Gastrocnemius medialis (tissue), 4 donors: ENCODE measurements at regions of chr15 and their contacts with region 1.

Region 1: DNA sequence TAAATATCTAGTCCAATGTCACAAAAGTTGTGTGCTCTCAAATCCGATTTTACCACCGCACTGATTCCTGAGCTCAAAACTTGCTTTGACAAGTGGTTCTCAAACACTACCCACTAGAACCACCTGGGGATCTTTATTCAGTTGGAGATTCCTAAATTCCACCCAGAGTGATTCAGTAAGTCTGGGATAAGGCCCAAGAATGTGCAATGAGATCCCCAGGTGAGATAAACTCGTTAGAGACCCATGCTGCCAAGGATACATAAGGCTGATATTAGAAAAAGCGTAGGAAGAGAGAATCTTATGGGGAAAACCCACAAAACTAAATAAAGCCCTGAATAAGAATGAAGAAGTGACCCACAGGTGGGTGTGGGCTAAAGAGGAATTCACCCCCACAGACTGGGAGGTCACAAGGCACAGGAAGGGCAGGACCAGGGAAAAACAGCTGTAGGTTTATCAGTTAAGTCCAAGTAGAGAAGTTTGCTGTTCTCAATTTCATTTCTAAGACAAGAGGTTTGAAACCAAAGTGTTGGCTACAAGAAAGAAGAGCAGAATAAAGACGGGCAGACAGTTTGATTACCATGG is 11.5 kb upstream of the RPS17 start:
- DNase-seq: no peak
- ATAC-seq: no peak
- H3K4me3 ChIP-seq: no peak overlapping the region
- H3K27ac ChIP-seq: no peak overlapping the region
- H3K4me1 ChIP-seq: peaks cover 19 to 34% of the 10 kb centered on the region in 2 donors
- H3K27me3 ChIP-seq: no peaks in the 10 kb centered on the region
- CTCF ChIP-seq: no peak
- POLR2A ChIP-seq: no peak

Region 2: DNA sequence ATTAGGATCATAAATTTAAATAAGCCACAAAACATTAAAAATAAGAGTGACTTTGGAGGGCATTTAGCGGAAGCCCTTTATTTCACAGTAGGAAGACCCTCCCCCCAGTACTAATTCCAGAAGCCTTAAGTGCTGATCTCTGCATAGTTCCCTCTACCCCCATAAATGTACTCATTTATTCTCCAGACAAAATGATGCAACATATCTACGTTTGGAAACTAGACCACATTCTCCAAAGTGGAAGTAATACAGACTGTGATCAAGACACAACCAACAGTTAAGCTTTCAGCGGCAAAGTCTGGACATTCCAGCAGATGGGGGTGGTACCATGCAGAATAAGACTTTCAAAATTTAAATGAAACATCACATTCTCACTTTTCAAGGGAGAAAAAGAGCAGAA is 33.3 kb after region 1 on chr15:
- in situ Hi-C with region 1: no loop called
- intact Hi-C with region 1: no loop called
- DNase-seq: no peak
- ATAC-seq: no peak
- H3K4me3 ChIP-seq: no peak overlapping the region
- H3K27ac ChIP-seq: no peak overlapping the region
- H3K4me1 ChIP-seq: no peaks in the 10 kb centered on the region
- H3K27me3 ChIP-seq: peaks cover 0 to 3% (median 0%) of the 10 kb centered on the region in 3 donors
- CTCF ChIP-seq: no peak
- POLR2A ChIP-seq: no peak

Region 3: GRCh38 chr15:82621964-82622363 is 70.2 kb after region 1 on chr15:
- in situ Hi-C with region 1: no loop called
- intact Hi-C with region 1: no loop called
- DNase-seq: no peak
- ATAC-seq: no peak
- H3K4me3 ChIP-seq: no peak overlapping the region
- H3K27ac ChIP-seq: no peak overlapping the region
- H3K4me1 ChIP-seq: no peaks in the 10 kb centered on the region
- H3K27me3 ChIP-seq: no peaks in the 10 kb centered on the region
- CTCF ChIP-seq: no peak
- POLR2A ChIP-seq: no peak

Region 4: DNA sequence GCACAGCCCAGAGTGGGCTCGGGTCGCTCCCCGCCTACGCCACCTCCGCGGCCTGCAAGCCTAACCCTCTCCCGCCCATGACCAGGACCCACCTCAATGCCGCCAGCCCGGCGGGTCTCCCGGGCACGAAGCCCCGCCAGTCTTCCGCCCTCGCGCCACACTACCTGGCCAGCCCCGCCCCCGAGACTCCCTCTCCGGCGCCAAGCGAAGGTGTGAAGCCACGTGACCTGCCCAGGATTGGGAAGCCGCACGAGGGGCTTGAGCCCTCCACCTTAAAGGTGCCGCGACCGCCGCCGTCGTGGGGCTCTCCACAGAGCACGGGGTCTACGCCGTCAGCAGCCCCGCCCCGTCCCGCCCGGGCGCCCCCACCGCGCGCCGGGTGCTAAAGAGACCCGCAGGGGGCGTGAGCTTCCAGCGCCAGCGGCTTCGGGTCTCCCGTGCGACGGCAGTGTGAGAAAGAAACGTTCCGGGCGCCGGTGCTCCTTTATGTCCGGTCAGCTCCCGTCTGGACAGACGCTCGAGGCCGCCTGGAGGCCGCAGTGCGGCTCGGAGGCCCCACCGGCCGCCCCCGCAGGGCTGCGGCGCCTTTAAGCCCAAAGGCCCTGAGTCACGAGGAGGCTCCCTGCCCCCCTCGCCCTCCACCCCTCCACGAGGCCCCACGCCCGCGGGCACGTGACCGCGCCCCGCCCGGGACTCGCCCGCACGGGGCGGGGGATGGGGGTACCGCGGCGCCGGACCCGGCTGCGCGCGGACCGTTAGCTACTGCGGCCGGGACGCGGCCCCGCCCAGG is 95.5 kb after region 1 on chr15 and contains the start of gene CPEB1:
- in situ Hi-C with region 1: no loop called
- intact Hi-C with region 1: loop called (anchors 5 kb)
- DNase-seq: peak; percentile 24 to 44
- ATAC-seq: peak; percentile 79 to 80
- H3K4me3 ChIP-seq: peak within 1 kb of the TSS; percentile 52 to 83 (median 63)
- H3K27ac ChIP-seq: peak within 1 kb of the TSS in 3 of 4 donors; percentile 33 to 42 (median 36)
- H3K4me1 ChIP-seq: peaks cover 12 to 17% of the 10 kb centered on the region in 2 donors
- H3K27me3 ChIP-seq: peaks cover 26 to 50% (median 38%) of the 10 kb centered on the region in 3 donors
- CTCF ChIP-seq: peak in 1 of 5 experiments; percentile 16
- POLR2A ChIP-seq: peak in 1 of 2 donors; percentile 31
- total RNA-seq, gene CPEB1: 0.69 to 3.9 (median 2.7) TPM